AG04450 (cell line): ENCODE measurements at regions of chr6 and their contacts with region 1.

Region 1: GRCh38 chr6:53492860-53493634 is 51.9 kb downstream of the GCLC start:
- DNase-seq: peak; percentile 36
- H3K4me3 ChIP-seq: peak overlapping the region; percentile 40
- H3K27ac ChIP-seq: peak overlapping the region; percentile 58
- H3K27me3 ChIP-seq: no peaks in the 10 kb centered on the region
- CTCF ChIP-seq: peak; percentile 72

Region 2: GRCh38 chr6:53361549-53362031 is 131.5 kb before region 1 on chr6:
- CTCF ChIA-PET with region 1: no interaction called
- POLR2A ChIA-PET with region 1: no interaction called
- DNase-seq: no peak
- H3K4me3 ChIP-seq: no peak overlapping the region
- H3K27ac ChIP-seq: no peak overlapping the region
- H3K27me3 ChIP-seq: no peaks in the 10 kb centered on the region
- CTCF ChIP-seq: no peak

Region 3: GRCh38 chr6:53539561-53539960 is 46.5 kb after region 1 on chr6:
- CTCF ChIA-PET with region 1: interaction called, 12 read pairs
- POLR2A ChIA-PET with region 1: interaction called, 21 read pairs
- DNase-seq: no peak
- H3K4me3 ChIP-seq: no peak overlapping the region
- H3K27ac ChIP-seq: no peak overlapping the region
- H3K27me3 ChIP-seq: no peaks in the 10 kb centered on the region
- CTCF ChIP-seq: no peak

Region 4: GRCh38 chr6:53556986-53557715 is 64.1 kb after region 1 on chr6:
- CTCF ChIA-PET with region 1: no interaction called
- POLR2A ChIA-PET with region 1: no interaction called
- DNase-seq: no peak
- H3K4me3 ChIP-seq: no peak overlapping the region
- H3K27ac ChIP-seq: no peak overlapping the region
- H3K27me3 ChIP-seq: no peaks in the 10 kb centered on the region
- CTCF ChIP-seq: no peak

Region 5: GRCh38 chr6:53641348-53641747 is 148.3 kb after region 1 on chr6:
- CTCF ChIA-PET with region 1: interaction called, 12 read pairs
- POLR2A ChIA-PET with region 1: interaction called, 3 read pairs
- DNase-seq: no peak
- H3K4me3 ChIP-seq: no peak overlapping the region
- H3K27ac ChIP-seq: no peak overlapping the region
- H3K27me3 ChIP-seq: no peaks in the 10 kb centered on the region
- CTCF ChIP-seq: 0 out of 2 replicates have a peak, but pooled peaks have one; percentile 10

Region 6: DNA sequence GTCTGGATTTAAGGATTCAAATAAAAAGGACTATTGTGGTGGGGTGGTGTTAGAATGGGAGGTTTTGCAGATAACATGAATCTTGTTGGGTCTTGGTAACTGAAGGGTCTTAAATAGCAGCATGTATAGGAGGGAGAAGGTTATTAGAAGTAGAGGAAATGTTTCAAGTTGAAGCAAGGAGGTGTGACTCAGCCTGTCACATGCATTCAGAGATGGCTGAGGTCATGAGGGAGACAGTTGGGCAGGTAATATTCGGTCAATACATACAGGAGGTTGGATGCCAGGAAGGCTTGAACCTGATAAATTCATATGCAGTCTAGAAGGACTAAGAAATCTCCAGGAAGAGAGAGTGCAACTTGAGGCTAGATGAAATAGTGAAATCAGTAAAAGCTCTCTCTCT is 166.4 kb after region 1 on chr6:
- CTCF ChIA-PET with region 1: interaction called, 17 read pairs
- POLR2A ChIA-PET with region 1: no interaction called
- DNase-seq: no peak
- H3K4me3 ChIP-seq: no peak overlapping the region
- H3K27ac ChIP-seq: no peak overlapping the region
- H3K27me3 ChIP-seq: peaks cover 7% of the 10 kb centered on the region
- CTCF ChIP-seq: no peak

Region 7: DNA sequence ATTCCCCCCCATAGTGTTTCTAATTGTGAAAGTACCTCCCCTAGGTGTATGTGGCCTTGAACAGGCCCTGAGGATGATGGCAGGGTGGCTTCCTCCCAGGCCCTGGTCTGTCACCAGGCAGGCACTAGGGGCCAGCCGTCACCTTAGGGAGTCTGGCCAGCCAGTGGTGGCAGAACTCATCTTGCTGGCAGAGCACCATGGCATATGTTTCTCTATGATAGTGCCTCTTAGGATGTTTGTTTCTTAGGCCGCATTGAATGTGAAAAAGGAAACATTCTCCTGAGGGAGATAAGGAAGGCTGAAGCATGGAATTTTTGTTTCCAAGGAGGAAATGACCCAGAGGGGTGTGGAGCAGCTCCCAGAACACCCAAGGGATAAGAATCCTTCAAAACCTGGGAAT is 217.7 kb after region 1 on chr6:
- CTCF ChIA-PET with region 1: interaction called, 16 read pairs
- POLR2A ChIA-PET with region 1: no interaction called
- DNase-seq: no peak
- H3K4me3 ChIP-seq: no peak overlapping the region
- H3K27ac ChIP-seq: no peak overlapping the region
- H3K27me3 ChIP-seq: no peaks in the 10 kb centered on the region
- CTCF ChIP-seq: no peak

Region 8: DNA sequence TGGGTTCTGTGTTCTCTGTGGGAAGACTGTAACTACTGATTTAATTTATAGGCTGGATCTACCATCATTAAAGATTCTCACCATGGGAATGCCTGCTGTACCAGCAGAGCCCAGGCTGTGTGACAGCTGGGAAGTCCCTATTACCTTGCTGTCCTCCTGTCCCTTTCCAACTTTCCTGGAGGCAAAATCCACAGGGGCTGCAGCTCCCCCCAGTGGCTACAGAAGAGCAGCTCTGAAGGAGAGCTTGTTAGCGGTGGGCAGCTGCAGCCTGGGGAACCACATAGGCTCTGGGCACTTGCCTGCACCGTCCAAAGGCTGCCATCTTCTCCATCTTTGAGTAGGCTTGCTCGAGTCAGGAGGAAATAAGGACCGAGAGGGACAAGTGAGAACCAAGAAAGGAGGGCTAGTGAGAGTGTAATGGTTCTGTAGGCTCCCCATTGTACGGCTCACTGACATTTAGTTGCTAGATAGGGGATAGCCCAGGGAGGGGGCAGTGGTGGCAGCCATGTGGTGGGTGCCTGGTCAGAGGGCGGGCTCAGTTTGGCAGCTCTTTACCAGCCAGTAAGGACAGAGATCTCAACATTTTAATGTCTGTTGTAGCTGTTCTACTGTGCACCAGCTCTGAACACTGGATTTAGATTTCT is 463.1 kb after region 1 on chr6:
- CTCF ChIA-PET with region 1: interaction called, 23 read pairs
- POLR2A ChIA-PET with region 1: no interaction called
- DNase-seq: peak; percentile 32
- H3K4me3 ChIP-seq: no peak overlapping the region
- H3K27ac ChIP-seq: no peak overlapping the region
- H3K27me3 ChIP-seq: no peaks in the 10 kb centered on the region
- CTCF ChIP-seq: peak; percentile 92